ENCODE measurements at regions of chr5 and their contacts with region 1.

Region 1: DNA sequence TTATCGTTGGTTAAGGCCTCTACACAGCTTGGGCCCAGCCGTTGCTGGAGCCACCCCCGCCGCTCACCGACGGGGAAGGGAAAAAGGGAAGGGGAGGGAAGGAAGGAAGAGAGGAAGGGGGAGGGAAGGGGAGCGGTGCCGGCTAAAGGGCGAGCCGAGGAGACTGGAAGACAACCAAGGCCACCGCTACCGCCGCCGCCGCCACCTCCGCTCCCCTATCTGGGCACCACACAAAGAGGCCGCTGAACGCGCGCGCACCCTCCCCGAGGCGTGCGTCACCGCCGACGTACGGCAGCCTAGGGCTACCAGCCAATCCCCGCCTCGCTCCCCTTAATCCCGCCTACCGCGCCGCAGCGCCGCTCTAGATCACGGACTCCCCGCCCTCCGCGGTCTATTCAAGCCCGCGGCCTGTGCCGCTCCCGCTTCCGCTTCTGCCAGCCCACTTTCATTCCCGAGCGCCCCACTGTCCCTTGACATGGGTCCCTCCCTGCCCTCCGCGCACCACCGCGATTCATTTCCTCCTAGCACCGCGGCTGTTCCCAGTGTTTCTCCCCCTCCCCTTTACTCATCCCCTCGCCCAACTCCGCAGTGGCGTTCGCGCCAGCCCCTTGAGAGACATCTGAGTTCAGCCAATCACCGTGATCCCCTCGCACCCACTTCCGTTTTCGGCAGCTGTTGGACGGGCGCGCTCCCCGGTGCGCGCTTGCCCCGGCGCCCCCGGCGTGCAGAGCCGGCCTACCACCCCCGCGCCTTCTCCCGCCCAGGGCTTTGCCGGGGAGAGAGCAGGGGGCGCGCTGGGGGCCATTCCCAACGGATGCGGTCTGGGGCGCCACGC is at the start of gene HNRNPA0:
- DNase-seq: peak; percentile 95 to 99 (median 96)
- ATAC-seq: peak; percentile 81
- H3K4me3 ChIP-seq: peak within 1 kb of the TSS; percentile 97
- H3K4me3 Mint-ChIP-seq: peak within 1 kb of the TSS; percentile 97
- H3K27ac ChIP-seq: peak within 1 kb of the TSS; percentile 100
- H3K27ac Mint-ChIP-seq: peak within 1 kb of the TSS; percentile 100
- H3K4me1 ChIP-seq: peaks cover 28% of the 10 kb centered on the region
- H3K4me1 Mint-ChIP-seq: peaks cover 37% of the 10 kb centered on the region
- H3K27me3 ChIP-seq: no peaks in the 10 kb centered on the region
- H3K27me3 Mint-ChIP-seq: no peaks in the 10 kb centered on the region
- CTCF ChIP-seq: no peak
- total RNA-seq, gene HNRNPA0: 52.7 to 53.2 TPM

Region 2: GRCh38 chr5:137665678-137666460 is 88.5 kb before region 1 on chr5:
- CTCF ChIA-PET with region 1: interaction called, 28 read pairs
- POLR2A ChIA-PET with region 1: interaction called, 28 read pairs
- intact Hi-C with region 1: no loop called
- DNase-seq: peak; percentile 9 to 68 (median 31)
- ATAC-seq: peak; percentile 100
- H3K4me3 ChIP-seq: no peak overlapping the region
- H3K4me3 Mint-ChIP-seq: no peak overlapping the region
- H3K27ac ChIP-seq: no peak overlapping the region
- H3K27ac Mint-ChIP-seq: peak overlapping the region; percentile 59
- H3K4me1 ChIP-seq: peaks cover 7% of the 10 kb centered on the region
- H3K4me1 Mint-ChIP-seq: peaks cover 31% of the 10 kb centered on the region
- H3K27me3 ChIP-seq: no peaks in the 10 kb centered on the region
- H3K27me3 Mint-ChIP-seq: no peaks in the 10 kb centered on the region
- CTCF ChIP-seq: no peak

Region 3: DNA sequence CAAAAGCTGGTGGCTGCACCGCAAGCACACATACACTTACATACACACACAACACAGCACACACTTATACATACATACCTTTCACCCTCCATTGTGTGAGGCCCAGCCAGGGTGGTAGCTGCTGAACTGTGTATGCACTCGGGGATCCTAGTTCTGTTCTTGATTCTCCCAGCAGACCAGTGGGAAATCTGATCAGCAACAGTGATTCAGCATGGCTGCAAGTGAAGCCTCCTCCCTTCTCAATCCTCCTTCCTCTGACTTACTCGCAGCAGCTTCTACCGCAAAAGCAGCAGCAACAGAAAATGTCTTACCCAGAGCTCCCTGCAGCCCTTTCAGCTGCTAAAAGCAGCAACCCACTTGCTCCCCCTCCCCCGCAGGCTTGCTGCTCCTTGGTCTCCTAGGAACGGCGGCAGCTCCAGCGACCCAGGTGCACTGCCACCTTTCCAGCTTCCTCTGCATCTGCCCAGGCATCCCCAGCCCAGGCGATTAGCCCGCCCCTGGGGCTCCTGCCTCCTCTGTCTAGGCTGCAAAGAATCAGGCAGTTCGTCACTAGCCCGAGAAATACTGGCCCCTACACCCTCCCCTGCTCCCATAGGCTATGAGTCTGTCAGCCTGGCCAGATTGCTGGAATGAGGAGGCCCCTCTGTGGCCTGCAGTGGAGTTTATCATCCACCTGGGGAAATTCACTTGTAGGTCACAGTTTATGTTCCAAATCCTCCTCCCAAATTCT is 18.6 kb before region 1 on chr5 and contains the start of gene KLHL3:
- CTCF ChIA-PET with region 1: interaction called, 4 read pairs
- POLR2A ChIA-PET with region 1: interaction called, 80 read pairs
- intact Hi-C with region 1: loop called in 1 of 2 experiments (anchors 2 kb)
- DNase-seq: peak in 13 of 14 experiments; percentile 17 to 65 (median 38)
- ATAC-seq: peak; percentile 48
- H3K4me3 ChIP-seq: peak within 1 kb of the TSS; percentile 72
- H3K4me3 Mint-ChIP-seq: no peak within 1 kb of the TSS
- H3K27ac ChIP-seq: peak within 1 kb of the TSS; percentile 31 to 68
- H3K27ac Mint-ChIP-seq: no peak within 1 kb of the TSS
- H3K4me1 ChIP-seq: peaks cover 42% of the 10 kb centered on the region
- H3K4me1 Mint-ChIP-seq: peaks cover 16% of the 10 kb centered on the region
- H3K27me3 ChIP-seq: no peaks in the 10 kb centered on the region
- H3K27me3 Mint-ChIP-seq: no peaks in the 10 kb centered on the region
- CTCF ChIP-seq: no peak
- total RNA-seq, gene KLHL3: 22.0 to 25.9 TPM

Region 4: GRCh38 chr5:137888857-137889759 is 134.8 kb after region 1 on chr5 and contains the start of gene PKD2L2:
- CTCF ChIA-PET with region 1: no interaction called
- POLR2A ChIA-PET with region 1: interaction called, 25 read pairs
- intact Hi-C with region 1: loop called in 1 of 2 experiments (anchors 5 kb)
- DNase-seq: peak; percentile 51 to 92 (median 74)
- ATAC-seq: peak; percentile 96
- H3K4me3 ChIP-seq: peak within 1 kb of the TSS; percentile 67
- H3K4me3 Mint-ChIP-seq: peak within 1 kb of the TSS; percentile 86
- H3K27ac ChIP-seq: peak within 1 kb of the TSS; percentile 60 to 84
- H3K27ac Mint-ChIP-seq: peak within 1 kb of the TSS; percentile 93
- H3K4me1 ChIP-seq: peaks cover 16% of the 10 kb centered on the region
- H3K4me1 Mint-ChIP-seq: peaks cover 29% of the 10 kb centered on the region
- H3K27me3 ChIP-seq: no peaks in the 10 kb centered on the region
- H3K27me3 Mint-ChIP-seq: peaks cover 4% of the 10 kb centered on the region
- CTCF ChIP-seq: no peak
- total RNA-seq, gene PKD2L2: not detected

Region 5: GRCh38 chr5:138178516-138179276 is 424.4 kb after region 1 on chr5 and contains the starts of genes BRD8 and KIF20A:
- CTCF ChIA-PET with region 1: no interaction called
- POLR2A ChIA-PET with region 1: interaction called, 6 read pairs
- intact Hi-C with region 1: loop called in 1 of 2 experiments (anchors 2 kb)
- DNase-seq: peak; percentile 77 to 94 (median 85)
- ATAC-seq: peak; percentile 86
- H3K4me3 ChIP-seq: peak within 1 kb of the TSS; percentile 94
- H3K4me3 Mint-ChIP-seq: no peak within 1 kb of the TSS
- H3K27ac ChIP-seq: peak within 1 kb of the TSS; percentile 55 to 76
- H3K27ac Mint-ChIP-seq: no peak within 1 kb of the TSS
- H3K4me1 ChIP-seq: peaks cover 27% of the 10 kb centered on the region
- H3K4me1 Mint-ChIP-seq: peaks cover 11% of the 10 kb centered on the region
- H3K27me3 ChIP-seq: no peaks in the 10 kb centered on the region
- H3K27me3 Mint-ChIP-seq: no peaks in the 10 kb centered on the region
- CTCF ChIP-seq: no peak
- total RNA-seq, gene BRD8: 6.9 to 9.6 TPM
- total RNA-seq, gene KIF20A: not detected

Region 6: DNA sequence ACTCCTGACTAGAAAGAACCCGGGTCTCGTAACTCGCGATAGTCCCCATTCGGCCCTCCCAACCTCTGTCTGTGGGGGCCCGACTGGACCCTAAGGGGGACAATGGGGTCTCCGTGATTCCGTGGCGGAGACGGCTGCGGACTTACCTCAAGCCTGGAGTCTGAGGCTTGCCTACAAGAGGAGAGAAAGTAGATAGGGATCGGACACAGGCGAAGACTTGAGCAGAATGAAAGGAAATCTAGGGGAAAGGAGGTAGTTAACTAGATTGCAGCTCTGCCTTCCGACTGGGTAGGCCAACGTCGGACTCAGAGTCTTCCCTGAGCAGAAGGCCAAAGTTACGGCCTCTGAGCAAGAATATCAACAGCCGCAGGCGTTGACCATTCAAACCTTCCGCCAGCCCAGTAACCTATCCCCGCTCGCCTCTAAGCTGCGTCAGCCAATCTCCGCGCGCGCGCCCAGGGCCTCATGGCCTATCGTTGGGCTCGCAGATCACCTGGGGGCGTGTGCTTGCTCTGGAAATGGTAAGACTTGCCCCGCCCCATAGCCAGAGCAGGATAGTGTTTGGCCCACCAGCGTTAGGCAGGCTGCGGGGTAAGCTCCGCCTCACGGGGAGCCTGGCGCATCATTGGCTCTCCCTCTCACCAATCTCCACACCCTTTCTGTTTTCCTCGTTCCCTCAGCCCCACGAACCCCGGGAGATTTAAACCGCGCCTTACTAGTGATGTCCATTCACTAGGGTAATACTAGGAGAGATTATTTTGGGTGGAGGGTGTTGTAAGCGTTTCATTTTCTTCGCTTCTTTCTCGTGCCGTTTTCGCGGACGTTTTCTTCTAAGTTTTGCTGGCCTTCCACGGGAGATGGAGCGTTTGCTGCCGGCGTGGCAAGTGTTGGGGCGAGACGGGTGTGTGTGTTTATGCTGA is 577.4 kb after region 1 on chr5 and contains the start of gene CDC25C:
- CTCF ChIA-PET with region 1: no interaction called
- POLR2A ChIA-PET with region 1: interaction called, 4 read pairs
- intact Hi-C with region 1: loop called in 1 of 2 experiments (anchors 10 kb)
- DNase-seq: peak; percentile 92 to 99 (median 95)
- ATAC-seq: peak; percentile 99
- H3K4me3 ChIP-seq: peak within 1 kb of the TSS; percentile 68
- H3K4me3 Mint-ChIP-seq: peak within 1 kb of the TSS; percentile 83
- H3K27ac ChIP-seq: no peak within 1 kb of the TSS
- H3K27ac Mint-ChIP-seq: peak within 1 kb of the TSS; percentile 40
- H3K4me1 ChIP-seq: peaks cover 13% of the 10 kb centered on the region
- H3K4me1 Mint-ChIP-seq: peaks cover 8% of the 10 kb centered on the region
- H3K27me3 ChIP-seq: no peaks in the 10 kb centered on the region
- H3K27me3 Mint-ChIP-seq: no peaks in the 10 kb centered on the region
- CTCF ChIP-seq: no peak
- total RNA-seq, gene CDC25C: not detected